GM10248 (cell line): ENCODE measurements at regions of chr10 and their contacts with region 1.

Region 1: DNA sequence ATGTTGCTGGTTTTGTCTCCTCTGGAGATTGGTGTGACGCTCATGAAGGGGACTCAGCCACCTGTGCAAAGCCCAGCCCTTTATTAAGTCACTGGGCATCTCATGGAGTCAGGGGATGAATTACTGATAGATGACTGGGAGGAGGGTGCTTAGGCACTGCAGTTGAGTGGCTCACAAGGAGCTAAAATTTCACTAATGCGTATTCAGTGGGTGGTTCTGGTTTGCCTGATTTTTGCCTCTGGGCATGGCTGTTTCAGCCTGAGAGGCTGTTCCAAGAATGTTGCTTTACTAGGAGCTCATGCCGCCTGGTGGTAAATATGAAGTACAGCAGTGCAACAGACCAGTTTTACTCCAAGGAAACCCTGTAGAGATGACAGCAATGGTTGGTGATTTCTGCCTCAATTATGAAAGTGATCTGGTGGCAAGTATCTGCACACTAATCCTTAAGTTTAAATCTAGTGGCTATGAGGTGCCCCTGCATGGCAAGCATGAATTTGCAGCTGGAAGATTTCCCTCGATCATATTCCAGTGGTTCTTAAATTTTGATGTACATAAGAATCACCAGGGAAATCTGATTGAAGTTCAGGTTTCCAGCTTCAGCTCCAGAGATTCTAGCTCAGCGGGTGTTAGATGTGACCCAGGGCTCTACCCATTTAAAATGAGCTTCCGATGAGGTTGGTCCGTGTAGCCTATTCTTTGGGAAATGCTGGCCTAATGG is 19.9 kb downstream of the ACTA2 start:
- DNase-seq: peak; percentile 44
- CTCF ChIP-seq: peak; percentile 89

Region 2: GRCh38 chr10:88728107-88728763 is 204.5 kb before region 1 on chr10:
- CTCF ChIA-PET with region 1: interaction called, 15 read pairs
- POLR2A ChIA-PET with region 1: no interaction called
- DNase-seq: no peak
- CTCF ChIP-seq: no peak

Region 3: GRCh38 chr10:88857831-88858230 is 74.9 kb before region 1 on chr10:
- CTCF ChIA-PET with region 1: interaction called, 10 read pairs
- POLR2A ChIA-PET with region 1: no interaction called
- DNase-seq: no peak
- CTCF ChIP-seq: no peak

Region 4: GRCh38 chr10:88913127-88913526 is 19.6 kb before region 1 on chr10:
- CTCF ChIA-PET with region 1: interaction called, 55 read pairs
- POLR2A ChIA-PET with region 1: no interaction called
- DNase-seq: no peak
- CTCF ChIP-seq: no peak

Region 5: DNA sequence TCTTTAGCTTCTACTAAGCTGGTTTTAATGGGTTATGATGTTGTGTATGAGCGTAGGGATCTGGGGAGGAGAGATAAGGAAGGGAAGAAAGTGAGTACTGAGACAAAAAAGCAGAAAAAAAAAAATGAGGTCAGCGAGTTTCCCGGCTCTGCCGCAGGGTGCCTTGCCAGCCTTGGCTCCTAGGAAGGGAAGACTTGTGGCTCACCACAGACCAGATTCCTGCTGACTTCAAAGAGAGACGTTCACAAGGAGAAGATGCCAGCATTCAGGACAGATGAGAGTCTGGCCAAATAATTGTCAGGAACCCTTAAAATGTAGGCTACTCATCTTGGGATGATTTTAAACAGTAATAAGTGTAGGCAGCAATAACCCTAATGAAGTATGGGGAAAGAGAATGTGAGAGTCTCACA is 46.5 kb after region 1 on chr10:
- CTCF ChIA-PET with region 1: interaction called, 57 read pairs
- POLR2A ChIA-PET with region 1: interaction called, 5 read pairs
- DNase-seq: no peak
- CTCF ChIP-seq: no peak

Region 6: DNA sequence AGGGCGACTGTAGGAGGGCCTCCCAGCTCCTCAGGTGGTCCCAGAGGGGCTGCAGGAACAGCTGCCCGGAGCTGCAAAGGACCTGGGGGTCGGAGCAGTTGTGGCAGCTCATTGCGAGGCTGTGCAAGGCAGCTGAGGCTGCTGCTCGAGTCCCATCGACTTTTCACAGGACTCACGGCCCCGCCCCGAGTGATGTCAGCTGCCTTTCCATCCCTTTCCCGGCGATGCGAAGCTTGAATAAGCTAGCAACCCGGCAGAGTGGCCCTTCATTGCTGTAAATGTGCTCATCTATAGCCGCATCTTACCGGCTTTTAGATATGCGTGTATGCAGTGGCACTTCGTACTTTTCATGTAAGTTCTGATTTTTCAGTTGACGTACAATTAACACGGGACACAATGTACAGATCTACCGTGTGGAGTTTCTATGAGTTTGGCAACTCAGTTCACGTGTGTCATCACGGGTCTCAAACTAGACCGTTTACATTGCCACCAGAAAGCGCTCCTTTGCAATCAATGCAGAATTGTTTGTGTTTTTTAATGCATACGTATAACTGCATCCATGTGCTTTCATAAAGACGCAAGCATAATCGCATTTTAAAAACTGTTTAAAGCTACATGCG is 274.6 kb after region 1 on chr10 and contains the start of gene CH25H:
- CTCF ChIA-PET with region 1: interaction called, 42 read pairs
- POLR2A ChIA-PET with region 1: interaction called, 3 read pairs
- DNase-seq: peak; percentile 36
- CTCF ChIP-seq: no peak

Region 7: GRCh38 chr10:89589101-89589720 is 656.5 kb after region 1 on chr10:
- CTCF ChIA-PET with region 1: no interaction called
- POLR2A ChIA-PET with region 1: no interaction called
- DNase-seq: no peak
- CTCF ChIP-seq: no peak